Activated T-helper 1 cell treated with anti-CD3 and anti-CD28 coated beads, Interleukin-12 subunit alpha, Interleukin-12 subunit beta, Interleukin-2, Interleukin-4 antibody, amounts not matched to agents 30 ng/mL and 10 ng/mL and 1 ng/mL, durations not matched to agents 14 hours and 24 hours and 36 hours (primary cell): ENCODE measurements at regions of chr2 and their contacts with region 1.

Region 1: DNA sequence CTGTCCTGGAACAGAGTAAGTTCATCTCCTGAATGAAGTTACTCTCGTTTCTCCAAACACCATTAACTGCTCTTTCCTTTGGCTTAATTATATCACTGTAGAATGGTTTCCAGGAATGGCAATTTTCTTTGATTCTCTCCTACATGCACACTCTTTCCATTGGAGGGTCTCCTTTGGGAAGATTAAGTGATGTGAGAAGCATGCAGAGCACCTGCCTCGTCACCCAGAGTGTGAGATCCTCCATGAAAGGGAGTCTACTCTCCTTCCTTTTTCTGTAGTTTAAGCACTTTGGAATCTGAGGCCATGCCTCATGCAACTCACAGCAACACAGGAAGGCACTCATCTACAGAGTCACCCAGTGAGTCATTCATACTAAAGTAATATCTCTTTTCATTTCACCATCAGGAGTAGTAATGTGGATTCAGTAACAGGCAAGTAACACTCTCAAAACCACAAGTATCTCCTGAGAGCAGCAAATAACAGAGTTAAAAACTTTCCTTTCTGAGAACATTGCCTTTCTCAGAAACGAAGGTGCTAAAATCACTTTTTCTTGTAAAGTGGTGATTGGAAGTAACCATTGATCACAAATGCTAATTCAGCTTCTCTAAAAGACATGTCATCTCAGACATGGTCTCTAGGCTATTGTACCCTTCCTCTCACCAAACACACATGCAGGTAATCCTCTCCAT is 52.8 kb upstream of the IL1RL1 start:
- DNase-seq: peak; percentile 36
- H3K4me3 Mint-ChIP-seq: peak overlapping the region; percentile 81
- H3K27ac Mint-ChIP-seq: peak overlapping the region; percentile 100
- H3K4me1 Mint-ChIP-seq: peaks cover 52% of the 10 kb centered on the region
- H3K27me3 Mint-ChIP-seq: no peaks in the 10 kb centered on the region

Region 2: DNA sequence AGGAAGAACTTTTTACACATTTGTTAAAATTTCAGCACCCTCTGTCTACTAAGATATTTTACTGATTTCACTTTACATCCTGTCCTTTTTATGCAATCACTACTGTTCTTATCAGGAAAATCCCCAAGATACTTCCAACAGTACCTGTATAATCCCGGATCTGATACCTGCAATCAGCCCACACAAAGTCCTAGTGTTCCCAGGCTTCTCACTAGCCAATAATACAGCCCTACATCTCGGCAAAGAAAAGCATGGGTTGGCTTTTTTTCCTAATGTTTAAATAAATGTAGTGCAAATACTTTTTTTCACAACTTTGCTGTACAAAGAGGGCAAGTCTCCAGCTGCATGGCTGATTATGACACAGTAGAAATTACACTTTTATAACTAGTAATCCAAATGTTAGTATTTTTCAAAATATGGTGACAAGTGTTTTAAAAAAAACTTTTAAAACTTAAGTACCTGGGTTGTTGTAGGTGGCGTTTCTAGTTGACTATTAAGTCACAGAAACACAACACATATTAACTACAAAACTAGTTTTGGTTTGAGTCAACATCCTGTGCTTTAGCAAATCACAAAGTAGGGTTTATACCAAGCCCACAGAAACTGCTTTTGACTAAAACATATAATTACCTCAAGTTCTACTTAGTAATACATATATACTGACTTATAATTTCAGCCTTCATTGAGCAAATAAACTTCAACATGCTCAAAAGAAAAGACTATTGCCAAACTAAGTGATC is 986.3 kb before region 1 on chr2:
- intact Hi-C with region 1: loop called (anchors 1 kb)
- DNase-seq: no peak
- H3K4me3 Mint-ChIP-seq: peak overlapping the region; percentile 59
- H3K27ac Mint-ChIP-seq: peak overlapping the region; percentile 81
- H3K4me1 Mint-ChIP-seq: peaks cover 48% of the 10 kb centered on the region
- H3K27me3 Mint-ChIP-seq: no peaks in the 10 kb centered on the region

Region 3: DNA sequence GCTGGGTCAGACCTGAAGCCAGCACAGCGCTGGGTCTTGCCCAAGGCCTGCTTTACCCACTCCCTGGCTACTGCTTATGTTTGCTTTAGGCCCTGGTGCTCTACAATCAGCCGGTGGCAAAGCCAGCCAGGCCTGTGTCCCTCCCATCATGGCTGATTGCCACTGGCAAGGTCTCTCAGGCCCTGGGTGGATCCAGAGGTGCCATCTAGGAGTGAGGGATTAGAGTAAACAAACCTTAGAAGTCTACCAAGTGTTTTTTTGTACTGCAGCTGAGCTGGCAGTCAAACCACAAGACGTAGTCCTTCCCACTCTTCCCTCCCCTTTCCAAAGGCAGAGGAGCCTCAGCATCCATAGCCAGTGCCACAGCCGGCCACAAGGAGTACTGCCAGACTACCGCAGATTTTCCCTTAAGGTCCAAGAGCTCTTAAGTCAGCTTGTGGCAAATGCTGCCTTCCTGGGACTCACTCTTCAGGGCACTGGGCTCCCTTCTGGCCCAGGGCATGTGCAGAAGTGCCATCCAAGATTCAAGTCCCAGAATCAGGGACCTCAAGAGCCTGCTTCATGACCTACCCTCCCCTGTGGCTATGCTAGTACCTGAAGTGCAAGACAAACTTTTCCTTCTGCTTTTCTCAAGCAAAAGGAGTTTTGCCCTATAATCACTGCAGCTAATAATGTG is 51.7 kb before region 1 on chr2:
- intact Hi-C with region 1: no loop called
- DNase-seq: no peak
- H3K4me3 Mint-ChIP-seq: no peak overlapping the region
- H3K27ac Mint-ChIP-seq: no peak overlapping the region
- H3K4me1 Mint-ChIP-seq: no peaks in the 10 kb centered on the region
- H3K27me3 Mint-ChIP-seq: peaks cover 9% of the 10 kb centered on the region

Region 4: DNA sequence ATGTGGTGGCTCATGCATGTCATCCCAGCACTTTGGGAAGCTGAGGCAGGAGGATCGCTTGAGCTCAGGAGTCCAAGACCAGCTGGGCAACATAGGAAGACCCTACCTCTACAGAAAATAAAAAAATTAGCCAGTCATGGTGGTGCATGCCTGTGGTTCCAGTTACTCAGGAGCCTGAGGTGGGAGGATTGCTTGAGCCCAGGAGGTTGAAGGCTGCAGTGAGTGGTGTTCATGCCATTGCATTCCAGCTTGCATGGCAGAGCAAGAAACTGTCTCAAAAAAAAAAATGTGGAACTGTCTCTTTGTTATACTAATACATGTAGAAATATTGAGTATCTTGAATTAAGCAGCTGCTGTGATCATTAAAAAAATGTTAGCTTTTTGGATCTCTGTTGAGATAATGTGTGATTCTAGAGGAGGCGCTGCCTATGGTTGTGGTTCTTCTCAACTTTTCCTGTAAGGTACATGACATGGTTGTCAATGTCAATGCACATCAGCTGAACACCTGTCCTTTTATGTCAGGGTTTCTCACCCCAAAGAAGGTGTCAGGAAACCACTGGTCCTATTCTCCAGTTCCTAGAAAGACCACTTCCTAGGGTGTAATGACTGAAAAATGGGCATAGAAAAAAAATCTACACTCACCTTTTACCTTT is 18.1 kb after region 1 on chr2:
- intact Hi-C with region 1: loop called (anchors 2 kb)
- DNase-seq: no peak
- H3K4me3 Mint-ChIP-seq: peak overlapping the region; percentile 54
- H3K27ac Mint-ChIP-seq: peak overlapping the region; percentile 73
- H3K4me1 Mint-ChIP-seq: peaks cover 71% of the 10 kb centered on the region
- H3K27me3 Mint-ChIP-seq: no peaks in the 10 kb centered on the region

Region 5: GRCh38 chr2:102355526-102356380 is 97.2 kb after region 1 on chr2 and contains the start of gene IL18R1:
- intact Hi-C with region 1: loop called (anchors 1 kb)
- DNase-seq: peak; percentile 71
- H3K4me3 Mint-ChIP-seq: peak within 1 kb of the TSS; percentile 97
- H3K27ac Mint-ChIP-seq: peak within 1 kb of the TSS; percentile 96
- H3K4me1 Mint-ChIP-seq: peaks cover 47% of the 10 kb centered on the region
- H3K27me3 Mint-ChIP-seq: no peaks in the 10 kb centered on the region
- total RNA-seq, gene IL18R1: 57.8 and 61.3 TPM in 2 replicates

Region 6: DNA sequence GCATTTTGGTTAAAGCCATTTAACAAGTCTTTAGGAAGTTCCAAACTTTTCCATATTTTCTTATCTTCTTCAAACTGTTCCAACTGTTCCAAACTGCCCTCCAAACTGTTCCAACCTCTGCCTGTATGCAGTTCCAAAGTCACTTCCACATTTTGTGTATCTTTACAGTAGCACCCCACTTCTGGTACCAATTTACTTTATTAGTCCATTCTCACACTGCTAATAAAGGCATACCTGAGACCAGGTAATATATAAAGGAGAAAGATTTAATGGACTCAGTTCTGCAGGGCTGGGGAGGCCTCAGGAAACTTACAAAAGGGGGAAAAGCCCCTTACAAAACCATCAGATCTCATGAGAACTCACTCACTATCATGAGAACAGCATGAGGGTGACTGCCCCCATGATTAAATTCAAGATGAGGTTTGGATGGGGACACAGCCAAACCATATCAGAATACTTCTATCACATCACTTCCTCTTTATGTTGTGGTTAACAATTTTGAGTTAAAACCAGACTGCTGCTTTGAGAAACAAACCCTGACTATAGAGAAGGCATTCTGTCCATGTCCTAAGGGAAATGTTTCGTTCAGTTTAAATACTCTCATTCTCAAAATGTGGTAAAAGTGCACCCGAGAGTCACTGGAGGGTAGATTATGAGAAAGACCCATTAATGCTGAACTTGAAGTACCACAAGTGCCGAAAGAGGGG is 108.0 kb after region 1 on chr2:
- intact Hi-C with region 1: loop called (anchors 2 kb)
- DNase-seq: no peak
- H3K4me3 Mint-ChIP-seq: peak overlapping the region; percentile 79
- H3K27ac Mint-ChIP-seq: peak overlapping the region; percentile 97
- H3K4me1 Mint-ChIP-seq: peaks cover 97% of the 10 kb centered on the region
- H3K27me3 Mint-ChIP-seq: no peaks in the 10 kb centered on the region

Region 7: GRCh38 chr2:102418421-102418961 is 160.0 kb after region 1 on chr2:
- intact Hi-C with region 1: loop called (anchors 1 kb)
- DNase-seq: peak; percentile 34
- H3K4me3 Mint-ChIP-seq: peak overlapping the region; percentile 90
- H3K27ac Mint-ChIP-seq: peak overlapping the region; percentile 94
- H3K4me1 Mint-ChIP-seq: peaks cover 68% of the 10 kb centered on the region
- H3K27me3 Mint-ChIP-seq: no peaks in the 10 kb centered on the region